Activated B cell treated with CpG ODN at 0.5 μM for 24 hours (primary cell): ENCODE measurements at regions of chr1 and their contacts with region 1.

Region 1: DNA sequence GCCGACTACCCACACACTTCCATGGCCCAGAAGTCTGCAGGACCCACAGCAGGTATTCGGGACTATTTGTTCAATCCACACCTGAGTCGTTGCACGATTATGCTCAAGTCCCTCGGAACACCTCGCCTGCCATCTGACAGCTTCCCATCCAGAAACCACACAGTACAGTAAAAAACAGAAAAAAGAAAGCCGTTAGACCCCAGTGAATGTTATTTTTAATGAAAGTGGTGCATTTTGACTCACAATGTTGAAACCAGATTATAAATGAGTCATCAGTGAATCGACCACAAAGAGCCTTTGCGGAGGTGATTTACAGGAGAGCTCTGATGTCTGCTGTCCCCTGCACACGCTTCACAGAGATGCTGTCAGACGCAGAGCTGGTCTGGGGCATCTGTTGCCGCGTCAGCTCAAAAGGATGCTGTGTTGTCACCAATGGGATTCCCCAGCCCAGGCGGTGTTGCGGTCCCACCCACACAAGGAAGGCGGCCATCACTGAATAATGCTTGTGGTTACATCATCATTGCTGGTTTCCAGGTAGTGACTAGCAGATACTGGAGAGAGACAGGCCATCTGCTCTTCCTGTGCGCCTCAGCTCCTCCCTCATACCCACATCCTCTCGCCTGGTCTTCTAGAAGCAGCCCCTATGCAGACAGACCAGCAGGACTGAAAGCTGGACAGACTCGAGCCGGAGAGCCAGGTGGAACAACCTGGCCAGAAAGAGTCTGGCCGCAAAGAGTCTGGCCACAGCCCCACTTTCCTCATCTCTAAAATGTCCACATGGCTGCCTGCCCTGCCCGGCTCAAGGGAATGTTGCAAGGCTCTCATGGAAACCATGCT is 116.8 kb downstream of the TOMM20 start:
- DNase-seq: peak; percentile 79
- ATAC-seq: peak; percentile 77
- H3K4me3 Mint-ChIP-seq: peak overlapping the region; percentile 47
- H3K27ac Mint-ChIP-seq: peak overlapping the region; percentile 99
- H3K4me1 Mint-ChIP-seq: peaks cover 94% of the 10 kb centered on the region
- H3K27me3 Mint-ChIP-seq: no peaks in the 10 kb centered on the region
- CTCF ChIP-seq: no peak

Region 2: DNA sequence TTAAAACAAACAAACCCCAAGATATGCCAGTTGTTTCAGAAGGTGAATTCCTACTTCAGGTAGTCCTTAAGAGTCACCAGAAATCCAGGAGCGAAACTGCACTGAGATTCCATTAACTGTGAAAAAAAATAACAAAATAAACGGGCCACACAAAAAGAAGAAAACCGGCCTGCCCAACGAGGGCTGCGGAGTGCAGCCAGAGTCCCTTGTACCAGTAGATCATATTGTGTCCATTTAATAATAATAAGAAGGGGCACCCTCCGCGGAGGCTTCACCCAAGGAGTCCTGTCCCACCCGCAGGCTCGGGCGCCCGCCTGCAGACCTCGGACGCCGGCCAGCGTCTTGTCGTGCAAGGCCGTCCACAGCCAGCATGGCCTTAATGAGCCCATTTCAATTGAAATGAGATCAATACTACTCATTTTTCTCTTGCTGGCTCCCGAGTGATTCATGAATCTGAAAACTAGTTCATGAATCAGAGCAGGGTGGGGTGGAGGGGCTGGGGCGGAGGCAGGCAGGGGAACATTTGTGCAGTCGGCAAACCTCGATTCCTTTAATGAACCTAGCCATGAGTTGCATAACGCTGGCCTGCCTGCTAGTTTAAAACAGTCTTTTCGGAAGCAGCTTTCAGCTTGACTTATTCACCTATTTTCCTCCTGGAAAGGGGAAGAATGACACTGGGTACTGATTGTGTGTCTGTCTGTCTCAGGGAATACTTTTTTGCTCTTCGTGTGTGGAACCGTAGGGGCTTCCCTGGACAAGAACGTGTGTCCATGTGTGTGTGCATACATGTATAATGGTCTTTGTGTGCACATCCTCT is 288.7 kb before region 1 on chr1:
- CTCF ChIA-PET with region 1: no interaction called
- POLR2A ChIA-PET with region 1: interaction called, 14 read pairs
- intact Hi-C with region 1: no loop called
- DNase-seq: no peak
- ATAC-seq: peak; percentile 41
- H3K4me3 Mint-ChIP-seq: peak overlapping the region; percentile 67
- H3K27ac Mint-ChIP-seq: peak overlapping the region; percentile 71
- H3K4me1 Mint-ChIP-seq: peaks cover 46% of the 10 kb centered on the region
- H3K27me3 Mint-ChIP-seq: no peaks in the 10 kb centered on the region
- CTCF ChIP-seq: no peak

Region 3: DNA sequence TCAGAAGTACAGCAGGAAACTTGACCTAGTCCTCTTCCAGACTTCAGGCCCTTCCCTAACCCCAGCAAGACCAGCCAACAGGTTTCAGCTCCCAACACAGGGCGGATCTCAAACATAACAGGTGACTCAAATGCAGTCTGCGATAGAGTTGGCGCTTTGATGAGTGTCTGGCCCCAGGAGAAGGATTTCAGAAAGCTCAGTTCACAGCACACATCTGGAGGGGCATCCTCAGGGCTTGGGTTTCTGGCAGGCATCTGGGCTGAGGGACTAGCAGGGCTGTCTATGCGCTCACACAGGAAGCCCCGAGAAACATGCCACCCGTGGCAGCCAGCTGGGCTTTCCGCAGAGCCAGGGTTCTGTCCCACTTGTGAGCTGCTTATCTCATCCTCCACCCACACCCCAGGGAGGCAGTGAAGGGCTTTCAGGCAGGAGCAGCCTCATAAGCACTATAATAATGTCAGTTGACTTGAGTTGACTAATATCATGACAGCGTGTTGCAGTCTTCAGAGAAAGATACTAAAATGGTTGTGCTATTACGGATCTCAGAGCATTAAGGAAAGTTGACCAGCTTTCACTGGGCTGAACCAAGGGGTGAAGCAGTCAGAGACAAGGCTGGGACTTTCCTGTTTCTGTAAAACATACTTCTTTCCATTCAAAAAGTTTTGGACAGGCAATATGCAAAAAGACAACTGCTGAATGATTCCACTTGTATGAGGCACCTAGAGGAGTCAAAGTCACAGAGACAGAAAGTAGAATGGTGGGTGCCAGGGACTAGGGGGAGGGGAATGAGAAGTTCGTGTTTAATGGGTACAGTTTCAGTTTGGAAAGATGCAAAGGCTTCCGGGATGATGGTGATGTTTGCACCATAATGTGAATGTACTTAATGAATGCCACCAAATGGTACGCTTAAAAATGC is 168.8 kb before region 1 on chr1:
- CTCF ChIA-PET with region 1: interaction called, 3 read pairs
- POLR2A ChIA-PET with region 1: interaction called, 13 read pairs
- intact Hi-C with region 1: loop called (anchors 1 kb)
- DNase-seq: peak; percentile 40
- ATAC-seq: peak; percentile 76
- H3K4me3 Mint-ChIP-seq: peak overlapping the region; percentile 62
- H3K27ac Mint-ChIP-seq: peak overlapping the region; percentile 71
- H3K4me1 Mint-ChIP-seq: peaks cover 52% of the 10 kb centered on the region
- H3K27me3 Mint-ChIP-seq: no peaks in the 10 kb centered on the region
- CTCF ChIP-seq: no peak

Region 4: GRCh38 chr1:234933475-234933874 is 78.3 kb before region 1 on chr1:
- CTCF ChIA-PET with region 1: interaction called, 4 read pairs
- POLR2A ChIA-PET with region 1: interaction called, 8 read pairs
- intact Hi-C with region 1: loop called (anchors 1 kb)
- DNase-seq: no peak
- ATAC-seq: peak; percentile 86
- H3K4me3 Mint-ChIP-seq: peak overlapping the region; percentile 50
- H3K27ac Mint-ChIP-seq: peak overlapping the region; percentile 70
- H3K4me1 Mint-ChIP-seq: peaks cover 21% of the 10 kb centered on the region
- H3K27me3 Mint-ChIP-seq: no peaks in the 10 kb centered on the region
- CTCF ChIP-seq: no peak

Region 5: GRCh38 chr1:234978397-234979295 is 33.2 kb before region 1 on chr1:
- CTCF ChIA-PET with region 1: interaction called, 31 read pairs
- POLR2A ChIA-PET with region 1: interaction called, 214 read pairs
- intact Hi-C with region 1: loop called (anchors 1 kb)
- DNase-seq: peak; percentile 68
- ATAC-seq: peak; percentile 58
- H3K4me3 Mint-ChIP-seq: peak overlapping the region; percentile 77
- H3K27ac Mint-ChIP-seq: peak overlapping the region; percentile 93
- H3K4me1 Mint-ChIP-seq: peaks cover 74% of the 10 kb centered on the region
- H3K27me3 Mint-ChIP-seq: no peaks in the 10 kb centered on the region
- CTCF ChIP-seq: no peak

Region 6: DNA sequence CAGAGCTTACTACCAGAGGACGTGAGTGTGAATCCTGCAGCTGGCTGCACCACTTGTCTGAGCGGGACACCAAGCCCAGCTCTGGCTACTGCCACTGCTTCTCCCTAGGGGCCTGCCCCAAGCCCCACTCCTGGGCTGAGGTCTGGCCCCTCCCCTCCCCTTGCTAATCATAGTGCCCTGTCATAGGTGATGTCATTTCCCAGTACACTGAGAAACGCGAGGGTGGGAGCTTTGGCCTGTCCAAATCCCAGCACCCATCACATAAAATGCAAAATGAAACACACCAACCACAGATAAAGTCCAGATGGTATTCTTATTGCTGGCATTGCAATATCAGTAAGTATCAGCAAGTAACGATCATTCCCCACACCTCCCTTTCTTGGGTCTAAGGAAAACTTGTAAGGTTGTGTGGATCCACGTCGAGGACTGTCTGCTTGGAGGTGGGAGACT is 39.1 kb after region 1 on chr1:
- CTCF ChIA-PET with region 1: interaction called, 11 read pairs
- POLR2A ChIA-PET with region 1: interaction called, 119 read pairs
- intact Hi-C with region 1: loop called (anchors 1 kb)
- DNase-seq: peak; percentile 30
- ATAC-seq: peak; percentile 51
- H3K4me3 Mint-ChIP-seq: peak overlapping the region; percentile 24
- H3K27ac Mint-ChIP-seq: peak overlapping the region; percentile 60
- H3K4me1 Mint-ChIP-seq: peaks cover 50% of the 10 kb centered on the region
- H3K27me3 Mint-ChIP-seq: no peaks in the 10 kb centered on the region
- CTCF ChIP-seq: no peak

Region 7: DNA sequence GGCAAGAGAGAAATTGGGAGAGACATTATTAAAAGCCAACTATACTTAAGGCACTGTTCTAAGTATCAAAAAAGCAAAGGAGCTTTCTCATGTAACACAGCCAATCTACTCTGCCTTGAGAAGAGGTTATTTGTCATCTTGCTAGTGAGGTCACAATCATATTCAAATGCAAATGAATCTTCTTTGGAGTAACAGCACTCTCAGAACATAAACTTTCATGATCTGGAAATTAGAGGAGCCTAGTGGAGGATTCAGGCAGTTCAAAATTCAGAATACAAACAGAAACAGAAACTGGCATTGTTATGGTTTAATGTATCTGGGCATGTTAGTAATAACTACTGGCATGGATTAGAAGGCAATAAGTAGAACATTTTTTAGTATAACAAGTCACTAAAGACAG is 258.8 kb after region 1 on chr1:
- CTCF ChIA-PET with region 1: no interaction called
- POLR2A ChIA-PET with region 1: no interaction called
- intact Hi-C with region 1: no loop called
- DNase-seq: no peak
- ATAC-seq: peak; percentile 22
- H3K4me3 Mint-ChIP-seq: peak overlapping the region; percentile 35
- H3K27ac Mint-ChIP-seq: peak overlapping the region; percentile 46
- H3K4me1 Mint-ChIP-seq: peaks cover 78% of the 10 kb centered on the region
- H3K27me3 Mint-ChIP-seq: no peaks in the 10 kb centered on the region
- CTCF ChIP-seq: no peak